Heart right ventricle (tissue), 16 donors: ENCODE measurements at regions of chr3 and their contacts with region 1.

Region 1: DNA sequence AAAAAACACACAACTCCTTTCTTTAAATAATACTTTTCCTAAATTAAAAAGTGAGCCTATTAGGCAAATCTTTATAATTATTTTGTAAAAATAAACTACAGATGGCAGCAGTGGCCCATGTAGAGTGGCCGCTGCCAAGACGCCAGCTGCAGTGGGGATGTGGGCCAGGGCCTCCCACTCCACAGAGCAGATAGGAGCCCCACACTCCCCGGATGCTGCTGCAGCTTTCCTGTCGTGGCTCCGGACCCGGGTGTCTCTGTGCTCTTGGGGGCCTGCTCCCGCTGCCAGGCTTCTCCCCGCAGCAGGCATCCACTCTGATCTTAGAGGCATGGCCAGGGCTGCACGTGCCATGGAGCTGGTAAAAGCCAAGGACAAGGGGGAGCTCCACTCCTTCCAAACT is 67.5 kb downstream of the PROS1 start:
- DNase-seq: peak; percentile 30 to 33
- ATAC-seq: peak in 7 of 8 donors; percentile 47 to 86 (median 81)
- H3K4me3 ChIP-seq: no peak overlapping the region
- H3K27ac ChIP-seq: no peak overlapping the region
- H3K4me1 ChIP-seq: peaks cover 0 to 5% (median 0%) of the 10 kb centered on the region in 9 donors
- H3K27me3 ChIP-seq: no peaks in the 10 kb centered on the region
- CTCF ChIP-seq: peak in 5 of 9 donors; percentile 29 to 52 (median 46)

Region 2: DNA sequence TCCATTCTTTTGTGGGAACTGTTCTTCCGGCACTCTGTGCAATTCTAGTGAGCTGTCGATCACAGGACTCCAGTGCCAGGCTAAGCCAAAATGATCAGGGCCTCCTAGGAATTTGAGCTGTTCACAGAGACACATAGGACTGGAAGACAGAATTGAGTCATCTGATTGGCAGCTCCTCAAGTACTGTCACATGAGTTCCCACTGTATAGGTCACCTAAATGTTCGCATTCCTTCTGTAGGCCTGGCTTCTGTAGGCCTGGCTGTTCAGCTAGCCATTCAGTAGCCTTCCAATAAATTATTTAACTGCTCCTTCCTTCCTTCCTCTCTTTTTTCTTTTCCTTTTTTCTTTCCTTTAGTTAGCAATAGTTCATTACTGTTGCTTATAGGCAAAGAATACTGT is 63.2 kb after region 1 on chr3:
- intact Hi-C with region 1: no loop called
- DNase-seq: no peak
- ATAC-seq: peak in 1 of 8 donors; percentile 27
- H3K4me3 ChIP-seq: no peak overlapping the region
- H3K27ac ChIP-seq: peak overlapping the region in 3 of 10 donors; percentile 23 to 54 (median 27)
- H3K4me1 ChIP-seq: peaks cover 0 to 33% (median 17%) of the 10 kb centered on the region in 9 donors
- H3K27me3 ChIP-seq: no peaks in the 10 kb centered on the region
- CTCF ChIP-seq: no peak

Region 3: GRCh38 chr3:94062431-94063404 is 156.5 kb after region 1 on chr3 and contains the starts of genes DHFR2 and NSUN3:
- intact Hi-C with region 1: loop called in 6 of 10 experiments (anchors 5 to 10 kb)
- DNase-seq: peak; percentile 89 to 93
- ATAC-seq: peak; percentile 91 to 98 (median 98)
- H3K4me3 ChIP-seq: peak within 1 kb of the TSS; percentile 42 to 83 (median 68)
- H3K27ac ChIP-seq: peak within 1 kb of the TSS; percentile 65 to 98 (median 90)
- H3K4me1 ChIP-seq: peaks cover 0 to 44% (median 22%) of the 10 kb centered on the region in 9 donors
- H3K27me3 ChIP-seq: no peaks in the 10 kb centered on the region
- CTCF ChIP-seq: no peak
- total RNA-seq, gene DHFR2: 2.6 to 4.9 (median 3.0) TPM
- total RNA-seq, gene NSUN3: 5.9 to 9.6 (median 7.1) TPM

Region 4: DNA sequence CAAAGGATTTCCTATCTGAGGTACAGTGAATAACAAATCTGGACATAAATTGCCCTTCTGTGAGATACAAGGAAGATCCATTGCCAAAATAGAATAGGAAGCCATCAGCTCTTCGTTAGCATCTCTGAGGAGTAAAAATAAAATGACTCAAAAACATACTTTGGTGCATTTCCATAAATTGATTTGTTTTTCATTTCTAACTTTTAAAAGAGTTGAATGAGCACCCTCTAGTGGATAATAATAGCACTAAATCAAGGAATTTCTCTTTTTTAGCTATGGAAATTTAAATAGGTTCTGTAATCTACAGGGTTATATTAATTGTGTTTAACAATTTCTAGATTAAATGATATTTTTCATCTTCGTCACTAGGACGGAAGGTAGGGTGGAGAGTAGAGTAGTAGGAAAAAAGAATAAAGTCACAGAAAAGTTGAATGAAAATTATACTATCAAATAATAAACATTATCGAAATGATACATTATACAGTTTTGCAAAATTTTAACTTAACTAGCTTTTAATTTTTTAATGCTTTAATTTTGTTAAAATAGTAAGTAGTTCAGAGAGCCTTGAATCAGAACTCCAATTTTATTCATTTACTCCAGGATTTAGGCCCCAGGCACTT is 163.1 kb after region 1 on chr3:
- intact Hi-C with region 1: loop called in 6 of 10 experiments (anchors 5 to 10 kb)
- DNase-seq: no peak
- ATAC-seq: peak in 1 of 8 donors; percentile 17
- H3K4me3 ChIP-seq: no peak overlapping the region
- H3K27ac ChIP-seq: no peak overlapping the region
- H3K4me1 ChIP-seq: peaks cover 0 to 32% (median 7%) of the 10 kb centered on the region in 9 donors
- H3K27me3 ChIP-seq: no peaks in the 10 kb centered on the region
- CTCF ChIP-seq: peak; percentile 30 to 78 (median 64)